HCT116 (cell line): ENCODE measurements at regions of chrX and their contacts with region 1.

Region 1: DNA sequence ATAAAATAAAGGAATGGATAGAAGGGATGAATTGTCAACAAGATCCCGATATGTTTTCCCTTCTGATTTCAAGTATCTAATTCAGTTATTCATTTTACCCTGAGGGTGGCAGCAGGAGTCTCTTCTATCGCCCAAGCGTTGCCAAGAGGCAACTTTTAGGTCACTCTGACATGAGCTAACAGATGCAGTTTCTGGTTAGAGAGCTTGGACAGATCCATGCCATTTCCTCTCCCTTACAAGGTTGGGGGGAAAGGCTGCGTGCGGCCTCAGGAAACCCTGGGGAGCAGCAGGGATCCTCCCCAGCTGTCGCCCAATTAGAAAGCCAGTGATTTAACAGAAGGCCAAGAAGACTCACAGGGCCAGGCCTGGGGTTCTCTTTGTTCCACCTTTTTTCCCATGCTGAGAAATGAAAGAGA is 35.3 kb upstream of the WAS start:
- DNase-seq: no peak
- ATAC-seq: peak; percentile 69
- H3K4me3 ChIP-seq: no peak overlapping the region
- H3K27ac ChIP-seq: no peak overlapping the region
- H3K4me1 ChIP-seq: no peaks in the 10 kb centered on the region
- H3K27me3 ChIP-seq: no peaks in the 10 kb centered on the region
- CTCF ChIP-seq: peak; percentile 7 to 22 (median 20); a peak in 1 of 6 replicates
- POLR2A ChIP-seq: no peak
- RAD21 ChIP-seq: peak; percentile 63

Region 2: DNA sequence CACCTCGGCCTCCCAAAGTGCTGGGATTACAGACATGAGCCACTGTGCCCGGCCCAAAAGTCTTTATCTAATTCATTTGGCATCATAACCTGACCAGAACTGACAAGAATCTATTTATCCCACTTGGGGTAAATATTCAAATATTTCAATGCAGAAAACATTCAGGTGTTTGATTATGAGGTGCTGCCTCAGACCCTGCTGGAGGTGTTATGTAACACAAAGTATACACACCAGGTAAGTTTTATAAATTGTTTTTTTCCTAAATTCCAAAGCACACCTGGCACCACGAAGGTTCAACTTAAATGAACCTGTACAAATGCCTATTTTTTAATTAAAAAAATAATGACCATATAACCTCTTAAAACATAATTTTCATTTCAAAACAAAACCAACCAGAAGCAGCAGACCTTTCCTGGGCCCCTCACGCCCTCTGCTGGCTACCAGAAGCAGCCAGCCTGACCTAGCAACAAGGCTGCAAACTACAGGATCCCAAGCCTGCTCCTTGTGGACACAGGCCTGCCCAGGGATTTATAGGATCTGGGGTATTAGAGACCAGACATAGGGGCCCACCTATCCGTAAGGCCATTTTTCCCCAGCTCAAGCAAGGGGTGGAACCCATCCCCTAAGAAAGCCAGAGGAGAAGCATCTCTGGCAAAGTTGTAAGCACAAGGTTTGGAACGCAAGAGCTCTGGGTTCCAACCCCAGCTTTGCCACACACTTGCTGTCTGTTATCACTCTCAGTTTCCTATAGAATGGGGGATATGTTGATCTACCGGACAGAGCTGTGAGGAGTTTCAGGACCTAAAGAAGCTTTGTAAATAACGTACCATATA is 297.4 kb after region 1 on chrX:
- CTCF ChIA-PET with region 1: no interaction called
- POLR2A ChIA-PET with region 1: no interaction called
- RAD21 ChIA-PET with region 1: no interaction called
- intact Hi-C with region 1: loop called (anchors 5 kb)
- DNase-seq: peak; percentile 6
- ATAC-seq: peak; percentile 92
- H3K4me3 ChIP-seq: no peak overlapping the region
- H3K27ac ChIP-seq: no peak overlapping the region
- H3K4me1 ChIP-seq: no peaks in the 10 kb centered on the region
- H3K27me3 ChIP-seq: no peaks in the 10 kb centered on the region
- CTCF ChIP-seq: peak; percentile 42 to 77 (median 62); a peak in 5 of 6 replicates
- POLR2A ChIP-seq: no peak
- RAD21 ChIP-seq: peak; percentile 59